ENCODE measurements at regions of chr13 and their contacts with region 1.

Region 1: DNA sequence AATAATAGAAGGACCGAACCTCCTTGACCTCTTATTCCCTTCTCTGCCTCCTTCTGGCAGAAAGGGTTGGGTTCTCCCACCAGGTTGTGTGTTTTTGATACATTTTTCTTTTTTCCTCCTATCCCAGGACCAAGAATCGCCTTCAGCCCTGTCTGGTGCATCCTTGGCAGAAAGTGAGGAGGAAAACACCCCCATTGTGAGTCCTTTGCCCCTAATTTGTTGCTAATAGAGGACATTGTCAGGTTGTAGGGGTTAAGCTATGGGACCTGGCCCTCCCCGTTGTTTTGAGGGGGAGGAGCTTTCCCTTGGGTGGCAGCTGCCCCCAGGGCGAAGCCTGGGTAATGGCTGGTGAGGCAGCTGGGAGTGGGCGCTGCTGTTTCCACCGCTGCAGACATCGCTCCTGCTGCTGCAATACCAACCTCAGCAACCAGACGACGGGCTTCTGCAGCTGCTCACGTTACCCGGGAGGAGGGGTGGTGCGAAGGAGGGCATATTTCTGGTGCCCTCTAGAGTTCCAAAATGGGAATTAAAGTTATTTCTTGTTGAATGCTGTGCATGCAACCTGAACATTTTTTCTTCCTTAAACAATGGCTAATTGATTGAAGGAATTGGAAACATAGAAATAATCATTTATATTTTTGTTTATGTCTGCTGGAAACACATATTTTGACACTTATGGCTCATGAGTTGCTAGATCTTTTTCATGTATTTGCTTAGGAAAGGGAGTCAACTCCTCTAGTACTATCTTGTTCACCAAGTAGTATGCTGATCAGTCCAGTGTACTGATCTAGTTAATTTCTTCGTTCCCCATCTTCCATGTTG is 1.5 kb downstream of the ZMYM2 start:
- DNase-seq: peak; percentile 61 to 91 (median 86)
- ATAC-seq: peak; percentile 63
- H3K4me3 ChIP-seq: peak overlapping the region; percentile 84
- H3K4me3 Mint-ChIP-seq: peak overlapping the region; percentile 90 to 99 (median 98)
- H3K27ac ChIP-seq: peak overlapping the region; percentile 97
- H3K27ac Mint-ChIP-seq: peak overlapping the region; percentile 91 to 99 (median 97)
- H3K4me1 ChIP-seq: peaks cover 19 to 30% of the 10 kb centered on the region in 2 donors
- H3K4me1 Mint-ChIP-seq: peaks cover 19 to 45% (median 31%) of the 10 kb centered on the region in 7 donors
- H3K27me3 ChIP-seq: no peaks in the 10 kb centered on the region
- H3K27me3 Mint-ChIP-seq: peaks cover 0 to 12% (median 0%) of the 10 kb centered on the region in 5 donors

Region 2: DNA sequence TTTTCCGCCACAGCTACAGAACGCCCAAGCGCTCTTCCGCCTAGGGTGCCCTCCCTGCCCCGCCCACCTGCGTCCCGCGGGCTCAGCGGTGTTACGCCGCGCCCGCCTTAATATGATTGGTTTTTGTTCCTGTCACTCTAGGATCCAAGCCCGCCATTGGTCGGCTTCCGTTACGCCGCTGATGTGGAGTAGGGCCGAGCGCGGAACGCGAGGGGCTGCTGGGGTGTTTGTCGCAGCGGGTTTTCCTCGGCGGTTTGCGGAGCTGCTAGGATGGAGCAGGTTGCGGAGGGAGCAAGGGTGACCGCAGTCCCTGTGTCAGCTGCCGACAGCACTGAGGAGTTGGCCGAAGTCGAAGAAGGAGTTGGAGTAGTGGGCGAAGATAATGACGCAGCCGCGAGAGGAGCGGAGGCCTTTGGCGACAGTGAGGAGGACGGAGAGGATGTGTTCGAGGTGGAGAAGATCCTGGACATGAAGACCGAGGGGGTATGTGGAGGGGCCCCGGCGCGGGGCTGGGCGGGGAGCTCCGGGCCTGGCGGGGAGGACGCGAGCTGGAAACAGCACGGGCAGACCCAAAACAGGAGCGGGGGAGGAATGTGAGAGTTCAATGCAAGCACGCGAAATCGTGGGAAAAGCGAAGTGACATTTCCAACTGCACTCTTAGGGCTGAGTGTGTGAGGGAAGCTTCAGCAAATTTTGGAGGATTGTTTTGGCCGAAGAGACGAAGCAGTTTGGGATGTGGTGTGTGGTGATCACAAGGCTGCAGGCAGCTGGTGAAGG is 326.4 kb before region 1 on chr13 and contains the start of gene MPHOSPH8:
- CTCF ChIA-PET with region 1: no interaction called
- POLR2A ChIA-PET with region 1: no interaction called
- intact Hi-C with region 1: loop called (anchors 1 kb)
- DNase-seq: peak; percentile 82 to 94 (median 92)
- ATAC-seq: peak; percentile 99
- H3K4me3 ChIP-seq: peak within 1 kb of the TSS; percentile 83
- H3K4me3 Mint-ChIP-seq: peak within 1 kb of the TSS; percentile 96 to 100 (median 100)
- H3K27ac ChIP-seq: peak within 1 kb of the TSS; percentile 91
- H3K27ac Mint-ChIP-seq: peak within 1 kb of the TSS; percentile 98 to 100 (median 99)
- H3K4me1 ChIP-seq: peaks cover 20 to 28% of the 10 kb centered on the region in 2 donors
- H3K4me1 Mint-ChIP-seq: peaks cover 29 to 42% (median 34%) of the 10 kb centered on the region in 7 donors
- H3K27me3 ChIP-seq: no peaks in the 10 kb centered on the region
- H3K27me3 Mint-ChIP-seq: peaks cover 0 to 3% (median 0%) of the 10 kb centered on the region in 5 donors
- total RNA-seq, gene MPHOSPH8: 50.6 to 131 (median 65.6) TPM

Region 3: DNA sequence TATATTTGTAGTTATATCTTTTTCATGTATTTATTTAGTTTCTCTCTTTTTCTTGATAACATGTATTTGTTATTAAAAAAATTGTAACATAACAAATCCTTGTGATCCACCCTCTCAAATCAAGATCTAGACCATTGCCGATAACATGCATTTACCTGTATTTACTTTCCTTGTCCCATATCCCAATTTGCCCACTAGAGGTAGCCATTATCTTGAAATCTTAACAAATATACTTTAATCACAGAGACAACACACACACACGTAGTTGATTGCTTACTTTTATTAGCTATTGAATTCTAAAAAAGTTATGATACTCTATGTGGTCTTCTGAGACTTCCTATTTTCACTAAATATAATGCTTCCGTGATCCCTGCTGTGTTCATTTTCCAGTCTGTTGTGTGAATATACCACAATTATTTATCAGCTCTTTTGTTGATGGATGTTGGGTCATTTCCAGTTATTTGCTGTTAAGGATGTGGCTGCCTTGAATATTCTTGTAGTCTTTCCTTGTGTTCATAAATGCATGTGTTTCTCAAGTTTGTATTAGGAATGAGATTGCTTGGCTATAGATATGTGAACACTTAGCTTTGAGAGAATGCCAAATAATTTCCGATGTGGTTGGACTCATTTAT is 32.8 kb before region 1 on chr13:
- CTCF ChIA-PET with region 1: interaction called, 8 read pairs
- POLR2A ChIA-PET with region 1: interaction called, 3 read pairs
- intact Hi-C with region 1: loop called in 1 of 2 experiments (anchors 1 kb)
- DNase-seq: peak in 6 of 9 donors; percentile 5 to 31 (median 24)
- ATAC-seq: peak; percentile 54
- H3K4me3 ChIP-seq: no peak overlapping the region
- H3K4me3 Mint-ChIP-seq: no peak overlapping the region
- H3K27ac ChIP-seq: no peak overlapping the region
- H3K27ac Mint-ChIP-seq: no peak overlapping the region
- H3K4me1 ChIP-seq: no peaks in the 10 kb centered on the region
- H3K4me1 Mint-ChIP-seq: peaks cover 0 to 5% (median 0%) of the 10 kb centered on the region in 7 donors
- H3K27me3 ChIP-seq: no peaks in the 10 kb centered on the region
- H3K27me3 Mint-ChIP-seq: no peaks in the 10 kb centered on the region

Region 4: GRCh38 chr13:20475927-20476691 is 516.1 kb after region 1 on chr13:
- CTCF ChIA-PET with region 1: no interaction called
- POLR2A ChIA-PET with region 1: no interaction called
- intact Hi-C with region 1: loop called in 1 of 2 experiments (anchors 1 kb)
- DNase-seq: peak; percentile 46 to 90 (median 84)
- ATAC-seq: peak; percentile 96
- H3K4me3 ChIP-seq: peak overlapping the region; percentile 59
- H3K4me3 Mint-ChIP-seq: peak overlapping the region; percentile 77 to 92 (median 86)
- H3K27ac ChIP-seq: peak overlapping the region; percentile 77
- H3K27ac Mint-ChIP-seq: peak overlapping the region; percentile 89 to 99 (median 98)
- H3K4me1 ChIP-seq: peaks cover 21 to 25% of the 10 kb centered on the region in 2 donors
- H3K4me1 Mint-ChIP-seq: peaks cover 18 to 79% (median 55%) of the 10 kb centered on the region in 7 donors
- H3K27me3 ChIP-seq: no peaks in the 10 kb centered on the region
- H3K27me3 Mint-ChIP-seq: peaks cover 0 to 5% (median 0%) of the 10 kb centered on the region in 5 donors

Region 5: DNA sequence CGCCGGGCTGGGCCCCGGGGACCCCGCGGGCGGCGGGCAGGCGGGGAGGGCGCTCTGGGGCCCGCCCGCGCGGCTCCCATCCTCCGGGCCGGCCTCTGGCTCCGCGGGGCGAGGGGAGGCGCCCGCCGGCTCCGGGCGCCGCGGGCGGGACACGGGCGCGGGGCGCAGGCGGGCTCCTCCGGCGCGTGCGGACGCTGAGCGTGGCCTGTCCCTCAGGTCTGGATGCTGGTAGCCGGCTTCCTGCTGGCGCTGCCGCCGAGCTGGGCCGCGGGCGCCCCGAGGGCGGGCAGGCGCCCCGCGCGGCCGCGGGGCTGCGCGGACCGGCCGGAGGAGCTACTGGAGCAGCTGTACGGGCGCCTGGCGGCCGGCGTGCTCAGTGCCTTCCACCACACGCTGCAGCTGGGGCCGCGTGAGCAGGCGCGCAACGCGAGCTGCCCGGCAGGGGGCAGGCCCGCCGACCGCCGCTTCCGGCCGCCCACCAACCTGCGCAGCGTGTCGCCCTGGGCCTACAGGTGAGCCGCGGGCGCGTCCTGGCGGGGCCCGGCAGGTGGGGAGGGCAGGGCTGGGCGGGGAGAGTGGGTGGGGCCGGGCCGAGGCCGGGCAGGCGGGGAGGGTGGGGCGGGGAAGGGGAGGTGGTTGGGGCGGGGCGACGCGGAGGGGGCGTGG is 743.9 kb after region 1 on chr13:
- CTCF ChIA-PET with region 1: no interaction called
- POLR2A ChIA-PET with region 1: no interaction called
- intact Hi-C with region 1: loop called in 1 of 2 experiments (anchors 2 kb)
- DNase-seq: peak; percentile 70 to 84 (median 80)
- ATAC-seq: peak; percentile 93
- H3K4me3 ChIP-seq: no peak overlapping the region
- H3K4me3 Mint-ChIP-seq: peak overlapping the region in 4 of 10 donors; percentile 59 to 97 (median 72)
- H3K27ac ChIP-seq: no peak overlapping the region
- H3K27ac Mint-ChIP-seq: peak overlapping the region in 1 of 9 donors; percentile 56
- H3K4me1 ChIP-seq: peaks cover 3 to 8% of the 10 kb centered on the region in 2 donors
- H3K4me1 Mint-ChIP-seq: peaks cover 0 to 13% (median 8%) of the 10 kb centered on the region in 7 donors
- H3K27me3 ChIP-seq: peaks cover 0 to 5% of the 10 kb centered on the region in 2 donors
- H3K27me3 Mint-ChIP-seq: peaks cover 13 to 48% (median 17%) of the 10 kb centered on the region in 5 donors

Region 6: GRCh38 chr13:21137696-21138095 is 1177.7 kb after region 1 on chr13:
- CTCF ChIA-PET with region 1: no interaction called
- POLR2A ChIA-PET with region 1: no interaction called
- intact Hi-C with region 1: loop called in 1 of 2 experiments (anchors 2 kb)
- DNase-seq: no peak
- ATAC-seq: no peak
- H3K4me3 ChIP-seq: no peak overlapping the region
- H3K4me3 Mint-ChIP-seq: no peak overlapping the region
- H3K27ac ChIP-seq: no peak overlapping the region
- H3K27ac Mint-ChIP-seq: no peak overlapping the region
- H3K4me1 ChIP-seq: peaks cover 12 to 22% of the 10 kb centered on the region in 2 donors
- H3K4me1 Mint-ChIP-seq: peaks cover 12 to 30% (median 22%) of the 10 kb centered on the region in 7 donors
- H3K27me3 ChIP-seq: peaks cover 0 to 3% of the 10 kb centered on the region in 2 donors
- H3K27me3 Mint-ChIP-seq: peaks cover 6 to 24% (median 19%) of the 10 kb centered on the region in 5 donors

Region 7: GRCh38 chr13:21670883-21671619 is 1711.0 kb after region 1 on chr13 and contains the start of gene FGF9:
- CTCF ChIA-PET with region 1: no interaction called
- POLR2A ChIA-PET with region 1: no interaction called
- intact Hi-C with region 1: loop called in 1 of 2 experiments (anchors 5 kb)
- DNase-seq: peak; percentile 76 to 88 (median 86)
- ATAC-seq: peak; percentile 89
- H3K4me3 ChIP-seq: peak within 1 kb of the TSS; percentile 92
- H3K4me3 Mint-ChIP-seq: peak within 1 kb of the TSS; percentile 88 to 98 (median 93)
- H3K27ac ChIP-seq: peak within 1 kb of the TSS; percentile 48
- H3K27ac Mint-ChIP-seq: peak within 1 kb of the TSS; percentile 61 to 94 (median 78)
- H3K4me1 ChIP-seq: peaks cover 19 to 32% of the 10 kb centered on the region in 2 donors
- H3K4me1 Mint-ChIP-seq: peaks cover 27 to 45% (median 44%) of the 10 kb centered on the region in 7 donors
- H3K27me3 ChIP-seq: peaks cover 0 to 4% of the 10 kb centered on the region in 2 donors
- H3K27me3 Mint-ChIP-seq: peaks cover 5 to 77% (median 20%) of the 10 kb centered on the region in 5 donors
- total RNA-seq, gene FGF9: 0.19 to 5.6 (median 2.0) TPM